ENCODE measurements at regions of chr2 and their contacts with region 1.

Region 1: GRCh38 chr2:234463626-234464290 is 33.1 kb downstream of the ARL4C start:
- DNase-seq: peak; percentile 80
- ATAC-seq: peak; percentile 75
- H3K4me3 Mint-ChIP-seq: peak overlapping the region; percentile 70
- H3K27ac Mint-ChIP-seq: peak overlapping the region; percentile 85
- H3K4me1 Mint-ChIP-seq: peaks cover 53% of the 10 kb centered on the region
- H3K27me3 Mint-ChIP-seq: no peaks in the 10 kb centered on the region

Region 2: DNA sequence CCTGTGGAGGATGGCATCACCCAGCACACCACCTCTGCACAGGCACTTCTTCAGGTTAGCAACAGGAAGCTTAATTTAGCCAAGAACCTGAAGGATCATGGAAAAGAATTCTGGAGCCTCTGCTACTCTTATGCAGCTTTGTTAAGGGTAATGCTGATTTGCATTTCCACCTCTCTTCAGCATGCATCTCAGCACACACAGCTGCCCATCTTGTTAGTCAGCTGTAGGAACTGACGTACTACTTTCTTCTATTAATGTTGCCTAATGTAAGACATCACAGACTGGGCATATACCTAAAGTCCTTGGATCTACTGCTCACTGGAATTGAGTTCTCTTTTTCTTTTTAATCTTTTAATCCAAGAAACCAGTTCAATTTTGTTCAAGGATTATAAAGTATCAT is 232.3 kb before region 1 on chr2:
- CTCF ChIA-PET with region 1: no interaction called
- DNase-seq: no peak
- ATAC-seq: no peak
- H3K4me3 Mint-ChIP-seq: no peak overlapping the region
- H3K27ac Mint-ChIP-seq: no peak overlapping the region
- H3K4me1 Mint-ChIP-seq: no peaks in the 10 kb centered on the region
- H3K27me3 Mint-ChIP-seq: no peaks in the 10 kb centered on the region

Region 3: DNA sequence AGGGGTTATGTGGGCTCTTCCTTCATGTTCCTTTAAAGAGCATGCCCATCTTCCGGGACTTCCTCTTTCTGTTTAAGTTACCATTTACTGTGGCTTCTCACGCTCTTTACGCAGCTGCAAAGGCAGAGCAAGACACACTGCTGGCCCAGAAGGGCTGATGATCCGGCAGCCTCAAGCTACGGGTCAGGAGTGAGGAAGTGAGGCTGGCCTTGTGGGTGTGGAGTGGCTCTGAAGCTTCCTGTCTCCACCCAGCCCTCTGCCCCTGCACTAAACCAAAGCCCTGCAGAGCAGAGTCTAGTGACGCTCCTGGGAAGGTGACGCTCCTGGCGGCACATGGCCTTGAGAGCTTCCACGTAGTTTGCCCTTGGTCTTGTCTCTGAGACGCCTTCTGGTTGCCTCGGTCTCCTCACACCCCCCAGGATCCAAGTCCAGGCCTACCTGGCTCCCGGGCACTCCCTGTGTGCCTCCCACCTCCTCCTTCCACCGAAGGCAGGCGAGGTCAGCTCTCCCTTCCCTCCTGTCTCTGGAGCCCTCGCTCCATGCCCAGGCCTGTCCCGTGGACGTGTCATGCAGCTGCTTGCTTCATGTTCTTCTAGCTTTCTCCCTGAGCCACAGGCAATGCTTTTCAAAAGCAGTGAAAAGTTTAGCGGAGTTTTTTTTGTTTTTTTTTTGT is 17.2 kb before region 1 on chr2:
- CTCF ChIA-PET with region 1: interaction called, 23 read pairs
- DNase-seq: peak; percentile 96
- ATAC-seq: peak; percentile 95
- H3K4me3 Mint-ChIP-seq: peak overlapping the region; percentile 44
- H3K27ac Mint-ChIP-seq: peak overlapping the region; percentile 97
- H3K4me1 Mint-ChIP-seq: peaks cover 84% of the 10 kb centered on the region
- H3K27me3 Mint-ChIP-seq: no peaks in the 10 kb centered on the region

Region 4: GRCh38 chr2:234478121-234478858 is 14.5 kb after region 1 on chr2:
- CTCF ChIA-PET with region 1: interaction called, 13 read pairs
- DNase-seq: peak; percentile 60
- ATAC-seq: peak; percentile 52
- H3K4me3 Mint-ChIP-seq: no peak overlapping the region
- H3K27ac Mint-ChIP-seq: peak overlapping the region; percentile 60
- H3K4me1 Mint-ChIP-seq: peaks cover 78% of the 10 kb centered on the region
- H3K27me3 Mint-ChIP-seq: no peaks in the 10 kb centered on the region